ENCODE measurements at regions of chr3 and their contacts with region 1.

Region 1: DNA sequence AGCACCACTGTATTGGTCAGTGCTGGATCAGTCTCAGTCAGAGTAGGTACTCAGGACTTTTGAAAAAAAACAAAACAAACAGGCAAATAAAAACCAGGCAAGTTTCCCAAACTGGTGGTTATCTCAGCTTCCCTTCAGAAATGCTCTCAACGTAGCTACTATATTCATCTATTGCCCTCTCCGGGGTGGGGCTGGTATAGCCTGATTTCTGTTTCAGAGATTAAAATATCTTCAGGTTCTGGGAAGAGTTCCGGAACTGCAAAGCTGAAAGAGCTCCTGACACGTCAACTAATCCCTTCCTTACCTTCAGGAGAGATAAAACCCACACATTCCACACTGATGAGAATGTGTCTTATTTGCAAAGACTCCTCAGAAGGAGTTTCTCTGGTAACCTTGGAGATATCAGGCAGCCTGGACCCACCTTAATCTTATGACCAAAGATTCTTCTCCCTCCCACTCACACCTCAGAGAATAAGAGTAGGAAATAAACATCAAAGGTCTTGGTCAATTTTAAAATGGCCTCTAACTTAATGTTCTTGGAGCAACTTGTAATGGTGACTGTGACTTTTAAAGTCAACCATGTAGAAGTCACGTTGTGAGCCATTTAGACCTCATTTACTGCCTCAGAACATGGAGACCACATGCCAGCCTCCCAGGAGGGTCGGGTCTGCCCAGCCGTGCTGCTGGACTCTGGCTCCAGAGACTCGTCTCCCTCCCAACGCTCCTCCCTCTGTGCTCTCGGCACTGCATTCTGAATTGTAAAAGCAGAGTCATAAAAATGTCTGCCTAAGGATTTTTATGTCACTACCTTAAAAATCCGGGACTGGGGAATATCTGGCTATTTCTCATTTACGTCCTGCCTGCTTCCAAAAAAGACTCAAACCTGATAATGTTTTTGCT is 53.8 kb downstream of the CDCP1 start:
- DNase-seq: peak; percentile 80 to 99
- H3K4me3 ChIP-seq: no peak overlapping the region
- H3K27ac ChIP-seq: peak overlapping the region; percentile 95
- H3K4me1 ChIP-seq: peaks cover 43% of the 10 kb centered on the region
- H3K27me3 ChIP-seq: no peaks in the 10 kb centered on the region
- CTCF ChIP-seq: peak; percentile 36; the same call in 1 of the 2 replicates

Region 2: GRCh38 chr3:45043728-45044299 is 48.6 kb before region 1 on chr3:
- CTCF ChIA-PET with region 1: interaction called, 16 read pairs
- POLR2A ChIA-PET with region 1: interaction called, 4 read pairs
- intact Hi-C with region 1: loop called (anchors 1 kb)
- DNase-seq: peak in 1 of 2 experiments; percentile 58
- H3K4me3 ChIP-seq: no peak overlapping the region
- H3K27ac ChIP-seq: peak overlapping the region; percentile 58; the same call in 1 of the 2 replicates
- H3K4me1 ChIP-seq: peaks cover 33% of the 10 kb centered on the region
- H3K27me3 ChIP-seq: no peaks in the 10 kb centered on the region
- CTCF ChIP-seq: no peak

Region 3: DNA sequence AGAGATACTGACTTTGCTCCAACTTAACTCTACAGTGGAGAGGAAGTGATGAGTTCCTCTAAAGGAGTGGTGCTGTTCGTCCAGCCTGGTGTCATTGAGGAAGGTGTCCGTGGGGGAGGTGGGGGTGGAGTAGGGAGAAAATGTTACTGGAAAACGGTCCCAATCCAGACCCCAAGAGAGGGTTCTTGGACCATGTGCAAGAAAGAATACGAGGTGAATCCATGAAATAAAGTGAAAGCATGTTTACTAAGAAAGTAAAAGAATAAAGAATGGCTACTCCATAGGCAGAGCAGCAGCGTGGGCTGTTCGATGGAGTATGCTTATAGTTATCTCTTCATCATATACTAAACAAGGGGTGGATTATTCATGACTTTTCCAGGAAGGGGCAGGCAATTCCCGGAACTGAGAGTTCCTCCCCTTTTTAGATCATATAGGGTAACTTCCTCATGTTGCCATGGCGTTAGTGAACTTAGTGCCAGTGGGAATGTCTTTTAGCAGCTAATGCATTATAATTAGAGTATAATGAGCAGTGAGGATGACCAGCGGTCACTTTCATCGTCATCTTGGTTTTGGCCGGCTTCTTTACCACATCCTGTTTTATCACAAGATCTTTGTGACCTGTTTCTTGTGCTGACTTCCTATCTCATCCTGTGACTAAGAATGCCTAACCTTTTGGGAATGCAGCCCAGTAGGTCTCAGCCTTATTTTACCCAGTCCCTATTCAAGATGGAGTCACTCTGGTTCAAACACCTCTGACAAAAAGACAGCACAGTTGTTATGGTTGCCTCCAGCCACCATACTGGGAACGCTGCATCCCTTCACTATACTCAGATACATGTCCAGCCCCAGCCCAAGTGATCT is 27.6 kb before region 1 on chr3:
- CTCF ChIA-PET with region 1: no interaction called
- POLR2A ChIA-PET with region 1: interaction called, 4 read pairs
- intact Hi-C with region 1: loop called (anchors 2 kb)
- DNase-seq: peak; percentile 61 to 90
- H3K4me3 ChIP-seq: no peak overlapping the region
- H3K27ac ChIP-seq: peak overlapping the region; percentile 65
- H3K4me1 ChIP-seq: peaks cover 37% of the 10 kb centered on the region
- H3K27me3 ChIP-seq: no peaks in the 10 kb centered on the region
- CTCF ChIP-seq: no peak

Region 4: GRCh38 chr3:45123030-45123429 is 30.6 kb after region 1 on chr3:
- CTCF ChIA-PET with region 1: interaction called, 3 read pairs
- POLR2A ChIA-PET with region 1: interaction called, 3 read pairs
- intact Hi-C with region 1: loop called (anchors 1 kb)
- DNase-seq: peak; percentile 22 to 94
- H3K4me3 ChIP-seq: peak overlapping the region; percentile 14; the same call in 1 of the 2 replicates
- H3K27ac ChIP-seq: peak overlapping the region; percentile 98
- H3K4me1 ChIP-seq: peaks cover 90% of the 10 kb centered on the region
- H3K27me3 ChIP-seq: no peaks in the 10 kb centered on the region
- CTCF ChIP-seq: no peak

Region 5: GRCh38 chr3:45137656-45138181 is 45.3 kb after region 1 on chr3:
- CTCF ChIA-PET with region 1: no interaction called
- POLR2A ChIA-PET with region 1: interaction called, 5 read pairs
- intact Hi-C with region 1: loop called (anchors 5 kb)
- DNase-seq: peak; percentile 31 to 72
- H3K4me3 ChIP-seq: no peak overlapping the region
- H3K27ac ChIP-seq: peak overlapping the region; percentile 76
- H3K4me1 ChIP-seq: peaks cover 80% of the 10 kb centered on the region
- H3K27me3 ChIP-seq: no peaks in the 10 kb centered on the region
- CTCF ChIP-seq: no peak

Region 6: DNA sequence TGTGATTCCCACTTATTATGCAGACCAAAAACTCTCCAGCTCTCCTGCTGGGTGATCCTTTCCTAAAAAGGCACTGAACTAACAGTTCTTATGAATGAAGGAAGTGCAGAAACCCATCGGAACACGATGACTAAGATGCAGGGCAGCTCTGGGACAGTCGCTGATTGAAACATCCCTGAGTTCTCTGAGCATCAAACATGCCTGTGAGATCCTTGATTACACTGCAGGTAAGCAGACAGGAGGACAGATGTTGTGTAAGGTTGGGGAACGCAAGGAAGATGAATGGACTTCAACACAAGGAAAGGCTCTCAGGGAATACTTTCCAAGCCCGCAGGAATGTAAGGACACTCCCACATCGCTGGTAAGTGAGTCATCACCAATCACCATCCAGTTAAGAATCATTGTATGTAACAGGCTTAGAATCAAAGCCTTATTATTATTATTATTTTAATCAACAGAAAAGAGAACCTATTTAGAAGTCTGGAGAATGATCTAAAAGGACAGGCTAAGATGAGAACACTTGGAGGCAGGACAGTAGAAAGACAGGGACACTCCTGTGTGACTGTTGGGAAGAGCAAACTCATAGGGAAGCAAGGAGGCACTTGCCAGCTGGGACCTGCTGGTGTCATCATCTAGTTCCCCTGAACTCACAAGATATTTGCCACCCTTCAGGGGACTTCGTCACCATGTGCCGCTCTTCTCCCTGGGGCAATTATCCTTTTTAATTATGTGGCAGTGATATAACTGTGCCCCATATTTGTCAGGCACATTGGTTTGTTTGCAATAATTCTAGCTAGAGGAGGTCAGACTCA is 107.7 kb after region 1 on chr3:
- CTCF ChIA-PET with region 1: no interaction called
- POLR2A ChIA-PET with region 1: no interaction called
- intact Hi-C with region 1: loop called (anchors 2 kb)
- DNase-seq: peak; percentile 72 to 97
- H3K4me3 ChIP-seq: no peak overlapping the region
- H3K27ac ChIP-seq: peak overlapping the region; percentile 92
- H3K4me1 ChIP-seq: peaks cover 32% of the 10 kb centered on the region
- H3K27me3 ChIP-seq: no peaks in the 10 kb centered on the region
- CTCF ChIP-seq: no peak

Measured in PC-9 (cell line).